K562 (cell line): ENCODE measurements at regions of chr11 and their contacts with region 1.

Region 1: DNA sequence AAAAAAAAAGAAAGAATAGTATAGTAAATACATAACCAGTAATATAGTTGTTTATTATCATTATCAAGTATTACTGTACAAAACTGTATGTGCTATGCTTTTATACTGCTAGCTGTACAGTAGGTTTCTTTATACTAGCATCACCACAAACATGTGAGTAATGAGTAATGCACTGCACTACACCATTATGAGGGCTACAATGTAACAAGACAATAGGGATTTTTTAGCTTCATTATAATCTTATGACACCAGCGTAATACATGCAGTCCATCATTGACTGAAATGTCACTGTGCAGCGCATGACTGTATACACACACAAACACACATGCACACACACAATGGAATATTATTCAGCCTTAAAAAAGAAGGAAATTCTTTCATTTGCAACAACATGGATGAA is 111.5 kb upstream of the ZBED5 start:
- DNase-seq: no peak
- ATAC-seq: no peak
- H3K4me3 ChIP-seq: no peak overlapping the region
- H3K27ac ChIP-seq: no peak overlapping the region
- H3K4me1 ChIP-seq: no peaks in the 10 kb centered on the region
- H3K27me3 ChIP-seq: peaks cover 0 to 6% of the 10 kb centered on the region in 2 experiments; a peak in 1 of 5 replicates
- CTCF ChIP-seq: no peak
- EP300 ChIP-seq: no peak
- POLR2A ChIP-seq: no peak
- RAD21 ChIP-seq: no peak

Region 2: DNA sequence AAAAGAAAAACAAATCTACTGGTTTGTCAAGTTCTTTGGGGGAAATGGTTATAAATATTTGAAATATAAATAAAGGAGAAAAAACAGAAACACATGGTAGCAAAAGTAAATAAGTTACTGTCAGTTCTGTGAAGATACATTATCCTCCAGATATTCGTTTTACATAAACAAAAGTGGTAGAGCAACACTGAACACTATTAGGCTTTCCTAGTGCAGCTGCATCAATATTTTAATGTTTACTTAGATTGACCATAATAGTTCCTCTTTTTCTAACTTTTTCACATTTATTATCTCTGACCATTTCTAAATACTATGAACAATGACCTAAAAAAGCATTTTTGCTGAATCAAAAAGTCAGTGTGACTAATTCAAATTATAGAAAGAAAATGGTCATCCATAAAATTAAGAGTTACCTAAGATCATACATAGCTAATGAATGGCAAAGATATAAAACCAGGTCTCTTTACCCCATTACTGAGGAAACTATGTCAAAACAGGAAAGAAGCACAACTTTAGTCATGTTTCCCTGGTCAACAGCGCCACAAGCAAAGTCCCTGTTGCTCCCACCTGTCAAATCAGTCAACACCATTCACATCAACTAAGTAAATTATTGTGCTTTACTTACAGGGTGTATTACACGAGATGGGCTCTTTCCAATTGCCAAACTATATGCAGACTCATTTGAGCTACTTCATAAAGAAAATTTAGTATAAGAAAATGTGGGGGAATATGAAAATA is 713.8 kb before region 1 on chr11:
- CTCF ChIA-PET with region 1: no interaction called
- POLR2A ChIA-PET with region 1: no interaction called
- in situ Hi-C with region 1: loop called (anchors 10 kb)
- intact Hi-C with region 1: no loop called
- DNase-seq: no peak
- ATAC-seq: no peak
- H3K4me3 ChIP-seq: no peak overlapping the region
- H3K27ac ChIP-seq: no peak overlapping the region
- H3K4me1 ChIP-seq: no peaks in the 10 kb centered on the region
- H3K27me3 ChIP-seq: no peaks in the 10 kb centered on the region
- CTCF ChIP-seq: no peak
- EP300 ChIP-seq: no peak
- POLR2A ChIP-seq: no peak
- RAD21 ChIP-seq: no peak

Region 3: DNA sequence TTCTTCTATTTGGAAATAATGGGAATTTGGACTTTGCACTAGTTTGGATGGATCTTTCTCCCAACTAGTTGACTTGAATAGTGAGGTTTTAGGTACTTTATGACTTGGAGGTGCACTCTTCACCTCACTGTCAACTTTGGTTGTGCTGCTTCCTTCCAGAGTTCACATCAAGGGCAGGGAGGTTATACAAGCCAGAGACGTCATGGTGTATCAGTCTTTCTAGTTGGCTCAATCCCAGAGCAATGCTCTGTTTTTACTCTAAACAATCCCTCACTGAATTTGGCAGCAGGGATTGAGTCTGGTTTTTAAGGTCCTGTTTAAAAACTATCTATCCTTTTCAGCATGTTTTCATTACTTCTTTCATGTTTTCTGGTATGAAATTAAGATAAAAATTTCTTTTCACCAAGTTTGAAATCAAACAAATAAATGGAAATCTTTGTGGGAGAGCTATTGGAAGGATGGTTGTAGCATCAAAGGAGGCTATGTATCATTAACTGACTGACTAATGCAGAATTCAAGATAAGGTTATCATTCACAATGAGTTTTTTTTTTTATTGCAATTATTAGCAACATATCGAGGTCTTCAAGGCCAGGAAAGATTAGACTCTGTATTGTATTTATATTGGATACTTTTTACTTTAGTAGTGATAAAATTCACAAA is 83.6 kb before region 1 on chr11:
- CTCF ChIA-PET with region 1: no interaction called
- POLR2A ChIA-PET with region 1: no interaction called
- in situ Hi-C with region 1: no loop called
- intact Hi-C with region 1: no loop called
- DNase-seq: no peak
- ATAC-seq: no peak
- H3K4me3 ChIP-seq: no peak overlapping the region
- H3K27ac ChIP-seq: no peak overlapping the region
- H3K4me1 ChIP-seq: no peaks in the 10 kb centered on the region; a peak in 1 of 5 replicates
- H3K27me3 ChIP-seq: no peaks in the 10 kb centered on the region
- CTCF ChIP-seq: no peak
- EP300 ChIP-seq: no peak
- POLR2A ChIP-seq: no peak
- RAD21 ChIP-seq: no peak

Region 4: DNA sequence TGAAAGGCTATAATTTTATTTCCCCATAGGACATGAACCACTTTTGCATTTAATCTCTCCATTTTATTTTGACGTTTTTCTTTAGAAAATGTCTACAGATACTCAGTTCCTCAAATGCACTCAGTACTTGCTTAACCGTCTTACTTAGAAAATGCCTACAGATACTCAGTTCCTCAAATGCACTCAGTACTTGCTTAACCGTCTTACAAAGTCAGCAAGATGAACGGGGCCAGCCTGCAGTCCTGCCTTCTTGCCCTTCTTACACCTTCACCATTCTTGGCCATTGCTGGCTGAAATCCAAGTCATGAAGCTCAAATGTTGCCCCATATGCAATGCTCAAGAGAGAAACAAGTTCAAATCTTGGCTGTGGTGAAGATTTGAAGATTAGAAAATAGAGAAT is 349.6 kb after region 1 on chr11:
- CTCF ChIA-PET with region 1: no interaction called
- POLR2A ChIA-PET with region 1: no interaction called
- in situ Hi-C with region 1: no loop called
- intact Hi-C with region 1: no loop called
- DNase-seq: no peak
- ATAC-seq: no peak
- H3K4me3 ChIP-seq: no peak overlapping the region
- H3K27ac ChIP-seq: no peak overlapping the region
- H3K4me1 ChIP-seq: no peaks in the 10 kb centered on the region
- H3K27me3 ChIP-seq: no peaks in the 10 kb centered on the region
- CTCF ChIP-seq: no peak
- EP300 ChIP-seq: no peak
- POLR2A ChIP-seq: no peak
- RAD21 ChIP-seq: no peak